ENCODE measurements at regions of chr19 and their contacts with region 1.

Region 1: GRCh38 chr19:52227196-52227940 is 37.5 kb downstream of the PPP2R1A start:
- DNase-seq: peak; percentile 27
- H3K4me3 Mint-ChIP-seq: peak overlapping the region; percentile 5
- H3K27ac Mint-ChIP-seq: peak overlapping the region; percentile 96
- H3K4me1 Mint-ChIP-seq: peaks cover 43% of the 10 kb centered on the region
- H3K27me3 Mint-ChIP-seq: no peaks in the 10 kb centered on the region

Region 2: GRCh38 chr19:52237771-52238400 is 10.5 kb after region 1 on chr19:
- CTCF ChIA-PET with region 1: interaction called, 12 read pairs
- POLR2A ChIA-PET with region 1: interaction called, 3 read pairs
- intact Hi-C with region 1: no loop called
- DNase-seq: peak; percentile 74
- H3K4me3 Mint-ChIP-seq: peak overlapping the region; percentile 5
- H3K27ac Mint-ChIP-seq: no peak overlapping the region
- H3K4me1 Mint-ChIP-seq: no peaks in the 10 kb centered on the region
- H3K27me3 Mint-ChIP-seq: no peaks in the 10 kb centered on the region

Region 3: DNA sequence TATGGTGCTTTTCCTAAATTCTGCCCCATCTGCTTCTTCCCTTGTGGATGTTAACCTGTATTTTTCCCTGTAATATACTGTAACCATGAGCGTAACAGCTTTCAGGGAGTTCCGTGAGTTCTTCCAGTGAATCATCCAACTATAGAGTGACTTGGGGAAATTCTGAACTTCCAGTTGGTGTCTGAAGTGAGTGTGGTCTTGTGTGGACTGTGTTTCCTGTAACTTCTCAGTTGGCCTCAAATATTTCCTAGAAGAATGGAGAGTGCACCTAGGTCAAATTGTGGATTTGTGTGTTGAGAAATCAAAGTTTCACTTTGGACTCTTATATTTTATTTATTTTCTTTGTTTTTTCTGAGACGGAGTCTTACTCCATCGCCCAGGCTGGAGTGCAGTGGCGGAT is 31.1 kb after region 1 on chr19:
- CTCF ChIA-PET with region 1: no interaction called
- POLR2A ChIA-PET with region 1: no interaction called
- intact Hi-C with region 1: no loop called
- DNase-seq: no peak
- H3K4me3 Mint-ChIP-seq: no peak overlapping the region
- H3K27ac Mint-ChIP-seq: no peak overlapping the region
- H3K4me1 Mint-ChIP-seq: no peaks in the 10 kb centered on the region
- H3K27me3 Mint-ChIP-seq: no peaks in the 10 kb centered on the region

Region 4: GRCh38 chr19:52453324-52454094 is 226.1 kb after region 1 on chr19 and contains the start of gene ZNF578:
- CTCF ChIA-PET with region 1: no interaction called
- POLR2A ChIA-PET with region 1: no interaction called
- intact Hi-C with region 1: no loop called
- DNase-seq: peak; percentile 82
- H3K4me3 Mint-ChIP-seq: peak within 1 kb of the TSS; percentile 73
- H3K27ac Mint-ChIP-seq: no peak within 1 kb of the TSS
- H3K4me1 Mint-ChIP-seq: peaks cover 13% of the 10 kb centered on the region
- H3K27me3 Mint-ChIP-seq: no peaks in the 10 kb centered on the region
- total RNA-seq, gene ZNF578: 0.56 to 0.78 TPM

Measured in activated CD4-positive, alpha-beta memory T cell treated with anti-CD3 and anti-CD28 coated beads for 36 hours (primary cell).